ENCODE measurements at regions of chr7 and their contacts with region 1.

Region 1: GRCh38 chr7:109879287-109879828 is 1211.6 kb upstream of the LRRN3 start:
- DNase-seq: no peak
- ATAC-seq: no peak
- H3K4me3 ChIP-seq: no peak overlapping the region
- H3K27ac ChIP-seq: no peak overlapping the region
- H3K4me1 ChIP-seq: no peaks in the 10 kb centered on the region
- H3K27me3 ChIP-seq: no peaks in the 10 kb centered on the region
- CTCF ChIP-seq: no peak
- EP300 ChIP-seq: no peak
- POLR2A ChIP-seq: no peak
- RAD21 ChIP-seq: no peak

Region 2: GRCh38 chr7:109915670-109916069 is 36.3 kb after region 1 on chr7:
- CTCF ChIA-PET with region 1: no interaction called
- POLR2A ChIA-PET with region 1: no interaction called
- in situ Hi-C with region 1: no loop called
- intact Hi-C with region 1: no loop called
- DNase-seq: no peak
- ATAC-seq: no peak
- H3K4me3 ChIP-seq: no peak overlapping the region
- H3K27ac ChIP-seq: no peak overlapping the region
- H3K4me1 ChIP-seq: no peaks in the 10 kb centered on the region
- H3K27me3 ChIP-seq: no peaks in the 10 kb centered on the region
- CTCF ChIP-seq: no peak
- EP300 ChIP-seq: no peak
- POLR2A ChIP-seq: no peak
- RAD21 ChIP-seq: no peak

Region 3: DNA sequence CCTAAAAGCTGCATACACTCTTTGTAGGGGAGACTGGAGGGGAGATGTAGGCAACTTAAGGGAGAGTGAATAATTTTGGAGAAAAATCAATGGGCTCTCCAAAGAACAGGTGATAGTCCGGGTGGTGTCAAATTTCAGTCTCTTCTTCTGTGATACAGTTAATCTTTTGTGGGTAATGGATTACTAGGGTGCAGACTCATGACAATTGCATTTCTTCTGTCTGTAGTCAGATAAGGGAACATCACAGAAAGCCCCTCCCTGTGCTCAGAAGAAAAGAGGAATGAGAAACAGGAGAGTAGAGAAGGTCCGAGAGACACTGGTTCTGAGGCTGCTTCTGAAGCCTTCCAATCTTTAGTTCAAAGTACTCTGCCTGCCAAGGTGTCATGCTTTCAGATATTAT is 70.9 kb after region 1 on chr7:
- CTCF ChIA-PET with region 1: no interaction called
- POLR2A ChIA-PET with region 1: no interaction called
- in situ Hi-C with region 1: no loop called
- intact Hi-C with region 1: loop called (anchors 2 kb)
- DNase-seq: no peak
- ATAC-seq: no peak
- H3K4me3 ChIP-seq: no peak overlapping the region
- H3K27ac ChIP-seq: no peak overlapping the region
- H3K4me1 ChIP-seq: no peaks in the 10 kb centered on the region
- H3K27me3 ChIP-seq: no peaks in the 10 kb centered on the region
- CTCF ChIP-seq: no peak
- EP300 ChIP-seq: no peak
- POLR2A ChIP-seq: no peak
- RAD21 ChIP-seq: no peak

Measured in HepG2 (cell line).